ENCODE measurements at regions of chr20 and their contacts with region 1.

Region 1: GRCh38 chr20:3710703-3711483 is 1.5 kb downstream of the SIGLEC1 start:
- DNase-seq: peak; percentile 59
- H3K4me3 ChIP-seq: no peak overlapping the region
- H3K27ac ChIP-seq: no peak overlapping the region
- H3K4me1 ChIP-seq: no peaks in the 10 kb centered on the region
- CTCF ChIP-seq: peak; percentile 97

Region 2: GRCh38 chr20:3563548-3564177 is 147.2 kb before region 1 on chr20:
- CTCF ChIA-PET with region 1: interaction called, 5 read pairs
- POLR2A ChIA-PET with region 1: no interaction called
- intact Hi-C with region 1: loop called (anchors 1 kb)
- DNase-seq: peak; percentile 65
- H3K4me3 ChIP-seq: no peak overlapping the region
- H3K27ac ChIP-seq: no peak overlapping the region
- H3K4me1 ChIP-seq: peaks cover 11% of the 10 kb centered on the region
- CTCF ChIP-seq: peak; percentile 95

Region 3: DNA sequence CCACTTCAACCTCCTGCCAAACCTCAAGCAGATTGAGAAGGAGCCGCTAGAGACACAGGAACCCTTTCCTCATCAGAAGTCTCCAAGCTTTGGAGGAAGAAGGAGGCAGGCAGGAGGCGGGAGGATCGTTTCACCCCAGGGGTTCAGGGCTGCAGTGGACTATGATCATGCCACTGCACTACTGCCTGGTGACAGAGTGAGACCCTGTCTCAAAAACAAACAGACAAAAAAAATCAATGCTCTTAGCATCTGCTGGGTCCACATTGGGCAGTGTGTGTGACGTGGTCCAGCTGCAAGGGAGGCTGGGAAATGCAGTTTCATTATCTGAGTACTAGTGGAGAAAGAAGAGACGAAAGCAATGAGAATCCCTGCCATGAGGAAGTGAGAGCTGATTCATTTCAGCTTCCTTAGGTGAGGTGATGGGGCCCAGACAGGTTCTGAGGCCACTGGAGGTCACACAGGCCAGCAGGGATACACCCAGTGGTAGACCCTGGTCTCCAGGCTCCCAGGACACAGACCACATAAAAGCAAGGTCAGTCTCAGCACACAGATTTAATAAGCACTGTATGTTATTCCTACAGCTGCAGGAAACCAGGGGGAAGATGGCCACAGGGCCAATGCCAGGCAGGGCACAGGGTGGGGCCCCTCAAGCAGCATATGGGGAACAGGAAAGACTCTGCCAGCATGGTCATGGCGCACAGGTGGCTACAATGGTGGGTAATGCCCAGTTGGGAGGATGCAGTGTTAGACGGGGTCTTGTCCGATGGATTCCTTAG is 52.0 kb before region 1 on chr20:
- CTCF ChIA-PET with region 1: no interaction called
- POLR2A ChIA-PET with region 1: no interaction called
- intact Hi-C with region 1: loop called (anchors 10 kb)
- DNase-seq: peak; percentile 34
- H3K4me3 ChIP-seq: no peak overlapping the region
- H3K27ac ChIP-seq: no peak overlapping the region
- H3K4me1 ChIP-seq: peaks cover 4% of the 10 kb centered on the region
- CTCF ChIP-seq: no peak

Region 4: DNA sequence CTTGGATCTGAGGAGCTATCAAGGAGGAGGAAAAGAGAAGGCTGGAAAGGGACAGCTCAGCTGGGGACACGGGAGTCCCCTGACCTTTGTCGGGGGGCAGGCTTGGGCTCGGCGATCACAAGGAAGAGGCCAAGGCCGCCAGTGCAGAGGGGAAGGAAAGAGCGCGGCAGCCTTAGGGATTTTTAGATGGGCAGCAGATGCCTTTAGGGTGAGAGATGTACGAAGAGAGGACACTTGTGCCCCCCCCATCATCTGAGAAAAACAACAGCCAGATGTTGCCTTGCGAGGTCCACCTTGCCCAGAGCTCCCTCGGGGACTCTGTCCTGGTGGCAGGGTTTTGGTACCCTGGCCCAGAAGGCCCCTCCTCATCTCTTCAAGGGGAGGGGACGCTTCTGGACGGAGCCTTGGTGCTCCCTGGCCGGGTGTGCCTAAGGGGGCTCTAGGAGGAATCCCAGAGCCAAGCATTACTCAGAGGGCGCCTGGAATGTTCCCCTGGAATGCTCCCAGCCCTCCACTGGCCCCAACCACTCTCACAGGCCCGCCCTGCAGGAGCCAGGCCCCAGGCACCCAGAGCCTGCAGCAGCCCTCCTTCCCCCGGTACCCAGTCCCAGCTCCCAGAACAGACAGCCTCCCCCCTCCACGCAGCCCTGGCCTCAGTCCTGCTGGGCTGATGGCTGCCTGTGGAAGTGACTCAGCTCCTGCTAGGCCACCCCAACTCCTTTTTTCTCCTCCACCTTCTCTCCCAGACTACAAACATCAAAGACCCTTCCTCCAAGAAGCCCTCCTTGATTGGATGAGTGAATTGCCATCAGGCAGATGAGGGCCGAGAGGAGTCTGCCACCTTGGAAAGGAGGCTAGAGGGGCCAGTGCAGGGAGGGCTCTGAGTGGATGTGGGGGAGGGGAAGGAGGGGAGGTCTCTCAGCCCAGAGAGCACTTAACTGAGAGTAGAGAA is 30.9 kb before region 1 on chr20:
- CTCF ChIA-PET with region 1: interaction called, 5 read pairs
- POLR2A ChIA-PET with region 1: no interaction called
- intact Hi-C with region 1: loop called (anchors 1 kb)
- DNase-seq: no peak
- H3K4me3 ChIP-seq: no peak overlapping the region
- H3K27ac ChIP-seq: no peak overlapping the region
- H3K4me1 ChIP-seq: no peaks in the 10 kb centered on the region
- CTCF ChIP-seq: no peak

Region 5: GRCh38 chr20:3727401-3728021 is 16.6 kb after region 1 on chr20:
- CTCF ChIA-PET with region 1: no interaction called
- POLR2A ChIA-PET with region 1: no interaction called
- intact Hi-C with region 1: no loop called
- DNase-seq: no peak
- H3K4me3 ChIP-seq: no peak overlapping the region
- H3K27ac ChIP-seq: no peak overlapping the region
- H3K4me1 ChIP-seq: no peaks in the 10 kb centered on the region
- CTCF ChIP-seq: no peak

Measured in OCI-LY7 (cell line).